Endothelial cell of umbilical vein (primary cell): ENCODE measurements at regions of chr2 and their contacts with region 1.

Region 1: DNA sequence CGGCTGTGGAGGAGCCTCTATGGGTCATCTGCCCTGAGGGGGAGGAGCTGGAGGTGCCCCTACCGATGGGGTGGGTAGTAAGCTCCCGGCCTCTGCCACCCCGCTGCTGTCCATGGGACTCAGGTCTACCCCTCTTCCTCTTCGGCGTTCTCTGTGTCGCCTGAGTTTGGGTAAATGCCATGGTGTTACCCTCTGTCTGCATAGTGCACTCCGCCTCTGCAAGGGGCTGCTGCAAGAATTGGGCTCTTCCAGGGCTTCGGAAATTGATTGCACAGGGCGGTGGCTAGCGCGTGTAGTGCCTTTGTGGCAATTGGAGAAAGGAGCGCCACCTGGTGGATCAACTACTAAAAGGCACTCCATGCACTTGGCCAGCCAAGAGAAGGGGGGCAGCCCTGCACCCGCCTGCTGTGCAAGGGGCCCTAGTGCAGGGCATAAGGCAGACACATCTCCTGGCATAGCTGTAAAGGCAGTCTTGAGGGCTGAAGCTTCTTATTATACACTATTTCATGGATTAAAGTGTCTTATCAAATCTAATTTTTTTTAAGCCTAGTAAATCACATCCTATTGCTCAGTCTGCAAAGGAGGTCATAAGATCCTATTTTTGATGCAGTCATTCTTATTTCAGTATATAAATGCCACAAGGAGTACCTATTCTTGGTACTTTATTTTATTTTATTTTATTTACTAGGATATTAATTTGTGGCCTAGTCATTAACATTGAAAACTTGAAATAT is 308.9 kb downstream of the PDE11A start:
- DNase-seq: peak; percentile 70
- H3K4me3 ChIP-seq: no peak overlapping the region
- H3K27ac ChIP-seq: no peak overlapping the region
- H3K4me1 ChIP-seq: peaks cover under 1% of the 10 kb centered on the region
- H3K27me3 ChIP-seq: no peaks in the 10 kb centered on the region
- CTCF ChIP-seq: peak; percentile 82 to 90
- POLR2A ChIP-seq: no peak

Region 2: DNA sequence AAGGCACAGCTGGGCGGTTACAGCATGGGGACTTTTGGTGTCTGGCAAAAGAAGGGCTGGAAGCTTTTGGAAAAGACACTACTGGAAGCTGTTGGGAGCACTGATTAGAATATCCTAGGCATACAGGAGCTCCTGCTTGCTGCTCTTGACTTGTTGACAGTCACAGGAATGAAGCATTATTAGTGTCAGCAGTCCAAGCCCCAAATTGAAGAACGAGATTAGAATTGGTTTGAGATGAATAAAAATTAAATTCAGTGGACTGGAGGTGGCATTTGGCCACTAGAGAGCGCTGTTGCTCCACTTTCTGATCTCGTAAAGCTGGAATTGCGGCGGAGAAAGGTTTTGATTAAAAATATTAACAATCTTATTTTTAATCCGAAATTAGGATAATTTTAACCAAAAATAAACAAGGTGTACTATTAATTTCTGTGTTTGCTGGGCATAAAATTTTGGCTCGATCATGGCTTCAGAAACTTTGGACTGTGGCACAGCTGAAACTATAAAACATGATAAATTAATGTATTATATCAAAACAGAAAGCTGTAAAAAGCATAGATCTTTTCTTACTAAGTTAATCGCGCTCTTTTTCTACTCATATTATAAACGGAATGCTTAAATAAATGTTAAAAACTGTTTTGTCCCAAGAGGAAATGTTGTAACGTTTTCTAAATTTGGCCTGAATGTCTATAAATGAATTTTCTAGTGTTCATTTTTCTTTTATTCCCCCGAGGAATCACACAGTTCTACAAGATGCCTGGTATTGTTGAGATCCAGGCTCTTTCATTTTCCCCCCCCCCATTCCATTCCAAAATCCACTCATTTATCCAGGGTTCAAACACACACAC is 1636.5 kb before region 1 on chr2:
- CTCF ChIA-PET with region 1: interaction called, 4 read pairs
- POLR2A ChIA-PET with region 1: no interaction called
- dilution Hi-C with region 1: no loop called
- intact Hi-C with region 1: loop called (anchors 5 kb)
- DNase-seq: peak; percentile 68
- H3K4me3 ChIP-seq: peak overlapping the region in 2 of 3 experiments; percentile 48 to 67
- H3K27ac ChIP-seq: no peak overlapping the region
- H3K4me1 ChIP-seq: peaks cover 33% of the 10 kb centered on the region
- H3K27me3 ChIP-seq: peaks cover 5 to 6% of the 10 kb centered on the region in 2 experiments
- CTCF ChIP-seq: peak; percentile 61 to 66
- POLR2A ChIP-seq: no peak

Region 3: DNA sequence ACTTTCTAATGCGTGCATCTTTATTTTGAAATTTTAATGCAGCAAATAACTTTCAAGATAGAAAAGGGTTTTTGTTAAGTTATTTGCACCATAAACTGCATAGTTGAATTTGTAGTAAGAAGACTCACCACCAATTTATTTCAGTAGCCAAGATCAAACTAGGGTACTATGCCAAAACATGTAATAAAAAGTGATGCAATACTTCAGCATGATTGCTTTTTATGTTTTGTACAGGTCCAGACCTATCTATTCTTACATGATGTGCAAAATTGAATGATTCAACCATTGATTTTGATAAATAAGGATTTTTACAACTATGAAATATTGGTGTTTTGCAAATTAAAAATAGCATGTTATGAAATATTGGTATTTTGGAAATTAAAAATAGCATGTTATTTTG is 344.4 kb before region 1 on chr2:
- CTCF ChIA-PET with region 1: interaction called, 8 read pairs
- POLR2A ChIA-PET with region 1: no interaction called
- dilution Hi-C with region 1: no loop called
- intact Hi-C with region 1: loop called (anchors 2 kb)
- DNase-seq: no peak
- H3K4me3 ChIP-seq: no peak overlapping the region
- H3K27ac ChIP-seq: no peak overlapping the region
- H3K4me1 ChIP-seq: peaks cover 26% of the 10 kb centered on the region
- H3K27me3 ChIP-seq: no peaks in the 10 kb centered on the region
- CTCF ChIP-seq: no peak
- POLR2A ChIP-seq: no peak

Region 4: GRCh38 chr2:177552422-177553175 is 211.1 kb before region 1 on chr2:
- CTCF ChIA-PET with region 1: no interaction called
- POLR2A ChIA-PET with region 1: no interaction called
- dilution Hi-C with region 1: no loop called
- intact Hi-C with region 1: loop called (anchors 5 kb)
- DNase-seq: peak; percentile 90
- H3K4me3 ChIP-seq: peak overlapping the region; percentile 57 to 93 (median 84)
- H3K27ac ChIP-seq: peak overlapping the region; percentile 91
- H3K4me1 ChIP-seq: peaks cover 41% of the 10 kb centered on the region
- H3K27me3 ChIP-seq: no peaks in the 10 kb centered on the region
- CTCF ChIP-seq: no peak
- POLR2A ChIP-seq: peak; percentile 47

Region 5: GRCh38 chr2:177618255-177619253 is 145.1 kb before region 1 on chr2:
- CTCF ChIA-PET with region 1: no interaction called
- POLR2A ChIA-PET with region 1: no interaction called
- dilution Hi-C with region 1: no loop called
- intact Hi-C with region 1: loop called (anchors 5 kb)
- DNase-seq: peak; percentile 94
- H3K4me3 ChIP-seq: peak overlapping the region; percentile 28 to 94 (median 46)
- H3K27ac ChIP-seq: peak overlapping the region; percentile 76
- H3K4me1 ChIP-seq: no peaks in the 10 kb centered on the region
- H3K27me3 ChIP-seq: no peaks in the 10 kb centered on the region
- CTCF ChIP-seq: no peak
- POLR2A ChIP-seq: peak; percentile 76

Region 6: DNA sequence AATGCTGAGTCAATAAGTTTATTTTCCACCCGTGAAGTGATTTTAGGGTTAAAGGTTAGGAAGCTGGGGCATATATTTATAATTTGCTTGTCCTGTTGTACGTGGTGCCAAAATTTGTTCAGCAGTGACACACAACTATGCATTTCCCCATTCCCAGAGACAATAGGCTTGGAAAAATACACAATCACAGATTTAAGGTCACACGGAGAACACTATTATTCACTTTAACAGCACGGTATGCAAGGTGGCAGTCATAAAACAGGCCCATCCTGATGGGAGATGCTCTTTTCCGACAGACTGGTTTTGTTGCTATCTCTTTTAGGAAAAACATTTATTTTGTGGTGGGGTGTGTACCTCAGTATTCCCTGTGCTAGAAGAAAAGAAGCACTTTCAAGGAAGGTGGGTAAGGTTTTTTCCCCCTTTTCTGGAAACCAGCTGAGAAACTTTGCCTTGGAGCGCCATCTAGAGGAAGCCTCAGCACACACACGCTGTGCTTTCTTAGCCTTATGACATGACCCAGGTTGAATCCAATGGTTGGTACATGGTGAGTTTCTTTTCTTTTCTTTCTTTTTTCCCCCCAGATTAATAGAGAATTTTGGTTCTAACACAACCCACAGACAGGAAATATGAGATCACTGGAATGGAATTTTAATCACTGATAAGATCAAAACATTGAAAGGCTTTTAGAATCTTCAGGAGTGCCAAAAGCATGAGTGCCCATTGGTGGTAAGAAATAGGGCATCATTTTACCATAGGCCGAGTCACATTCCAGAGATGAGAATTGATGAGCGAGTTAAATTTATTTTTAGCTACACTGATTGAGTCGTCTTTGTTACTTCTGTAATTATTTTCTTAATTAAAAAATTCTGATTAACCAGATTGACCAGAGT is 39.1 kb before region 1 on chr2:
- CTCF ChIA-PET with region 1: interaction called, 17 read pairs
- POLR2A ChIA-PET with region 1: no interaction called
- dilution Hi-C with region 1: no loop called
- intact Hi-C with region 1: loop called (anchors 2 kb)
- DNase-seq: peak; percentile 89
- H3K4me3 ChIP-seq: peak overlapping the region in 1 of 3 experiments; percentile 9
- H3K27ac ChIP-seq: peak overlapping the region; percentile 62
- H3K4me1 ChIP-seq: peaks cover 13% of the 10 kb centered on the region
- H3K27me3 ChIP-seq: no peaks in the 10 kb centered on the region
- CTCF ChIP-seq: peak; percentile 84 to 94
- POLR2A ChIP-seq: no peak

Region 7: DNA sequence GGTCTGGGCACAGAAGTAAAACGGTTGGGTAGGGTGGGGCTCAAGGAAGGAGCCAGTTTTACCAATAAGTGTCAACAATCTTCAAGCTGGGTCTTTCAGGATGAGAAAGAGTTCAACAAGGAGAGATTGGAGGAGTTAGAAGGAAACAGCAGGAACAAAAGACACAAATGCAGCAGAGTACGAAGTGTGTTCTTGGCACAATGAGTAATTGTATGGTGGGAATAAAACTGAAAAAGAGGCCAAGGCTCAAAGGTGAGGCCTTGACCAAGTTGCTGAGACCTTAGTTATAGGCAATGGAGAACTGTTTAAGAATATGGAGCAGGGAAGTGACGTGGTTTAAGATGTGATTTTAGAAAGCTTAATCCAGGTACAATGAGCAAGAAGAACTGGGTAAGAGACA is 78.5 kb after region 1 on chr2:
- CTCF ChIA-PET with region 1: no interaction called
- POLR2A ChIA-PET with region 1: no interaction called
- dilution Hi-C with region 1: no loop called
- intact Hi-C with region 1: no loop called
- DNase-seq: no peak
- H3K4me3 ChIP-seq: no peak overlapping the region
- H3K27ac ChIP-seq: no peak overlapping the region
- H3K4me1 ChIP-seq: no peaks in the 10 kb centered on the region
- H3K27me3 ChIP-seq: no peaks in the 10 kb centered on the region
- CTCF ChIP-seq: no peak
- POLR2A ChIP-seq: no peak